CD8-positive, alpha-beta memory T cell (primary cell): ENCODE measurements at regions of chr6 and their contacts with region 1.

Region 1: DNA sequence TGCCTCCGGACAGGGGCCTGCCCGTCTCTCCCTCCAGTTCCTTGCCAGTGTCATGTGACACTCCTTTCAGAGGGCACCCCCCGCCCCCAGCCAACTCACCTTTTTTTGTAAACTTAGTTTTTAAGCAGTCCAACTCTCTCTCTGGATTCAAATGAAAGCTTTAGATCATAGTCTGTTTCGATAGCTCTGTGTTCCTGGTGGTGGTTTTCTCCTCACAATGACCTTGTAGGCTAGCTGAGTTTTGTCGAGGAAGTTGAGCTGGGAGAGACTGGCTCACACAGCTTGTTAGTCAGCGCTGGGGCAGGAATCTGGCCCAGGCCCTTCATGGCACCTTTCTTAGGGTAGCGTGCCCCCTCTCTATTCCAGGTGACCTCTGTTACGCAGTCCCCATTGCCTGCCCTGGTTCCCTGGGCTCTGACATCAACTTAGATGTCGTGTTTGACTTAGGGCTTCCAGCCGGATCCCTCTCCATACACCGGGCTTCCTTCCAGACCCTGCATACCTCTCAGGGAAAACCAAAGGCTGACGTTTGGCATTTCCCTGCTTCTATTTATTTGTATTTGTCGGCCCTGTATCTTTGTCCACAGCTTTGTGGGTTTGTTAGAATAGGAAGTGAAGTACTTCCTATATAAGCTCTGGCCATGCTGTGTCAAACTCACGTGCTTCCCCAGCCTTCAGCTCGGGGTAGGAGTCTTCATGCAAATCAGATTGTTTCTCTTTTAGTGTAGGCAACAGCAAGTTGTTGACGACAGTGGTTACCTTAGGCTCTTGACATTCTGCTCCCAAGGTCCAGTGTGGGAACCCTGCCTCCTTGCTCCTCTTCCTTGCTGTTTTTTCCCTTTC is 12.7 kb downstream of the IGF2R start:
- DNase-seq: peak in 4 of 5 donors; percentile 31 to 63 (median 38)
- H3K4me3 ChIP-seq: peak overlapping the region; percentile 9
- H3K4me3 Mint-ChIP-seq: peak overlapping the region; percentile 70 to 83 (median 80)
- H3K27ac ChIP-seq: peak overlapping the region; percentile 40
- H3K27ac Mint-ChIP-seq: peak overlapping the region; percentile 84 to 99 (median 96)
- H3K4me1 ChIP-seq: peaks cover 89% of the 10 kb centered on the region
- H3K4me1 Mint-ChIP-seq: peaks cover 89 to 100% (median 99%) of the 10 kb centered on the region in 3 donors
- H3K27me3 ChIP-seq: no peaks in the 10 kb centered on the region
- H3K27me3 Mint-ChIP-seq: no peaks in the 10 kb centered on the region

Region 2: DNA sequence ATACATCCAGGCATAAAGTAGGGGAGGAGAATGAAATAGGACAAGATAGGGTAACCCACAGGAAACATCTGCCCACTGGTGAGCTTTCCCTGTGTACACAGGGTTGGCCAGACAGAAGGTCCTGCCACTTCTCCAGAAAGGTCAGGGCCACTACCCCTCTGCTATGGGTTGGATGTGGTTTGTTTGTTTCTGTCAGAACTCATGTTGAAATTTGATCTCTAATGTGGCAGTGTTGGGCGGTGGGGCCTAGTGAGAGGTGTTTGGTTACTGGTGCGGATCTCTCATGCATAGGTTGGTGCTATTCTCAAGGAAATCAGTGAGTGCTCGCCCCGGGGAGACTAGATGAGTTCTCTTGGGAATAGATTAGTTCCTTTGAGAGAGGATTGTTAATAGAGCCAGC is 106.4 kb before region 1 on chr6:
- CTCF ChIA-PET with region 1: no interaction called
- POLR2A ChIA-PET with region 1: no interaction called
- DNase-seq: no peak
- H3K4me3 ChIP-seq: no peak overlapping the region
- H3K4me3 Mint-ChIP-seq: no peak overlapping the region
- H3K27ac ChIP-seq: no peak overlapping the region
- H3K27ac Mint-ChIP-seq: no peak overlapping the region
- H3K4me1 ChIP-seq: no peaks in the 10 kb centered on the region
- H3K4me1 Mint-ChIP-seq: peaks cover 0 to 3% (median 0%) of the 10 kb centered on the region in 3 donors
- H3K27me3 ChIP-seq: no peaks in the 10 kb centered on the region
- H3K27me3 Mint-ChIP-seq: peaks cover 3 to 26% of the 10 kb centered on the region in 2 donors

Region 3: GRCh38 chr6:159890792-159891191 is 90.8 kb before region 1 on chr6 and contains the start of gene MAS1:
- CTCF ChIA-PET with region 1: no interaction called
- POLR2A ChIA-PET with region 1: no interaction called
- DNase-seq: no peak
- H3K4me3 ChIP-seq: no peak within 1 kb of the TSS
- H3K4me3 Mint-ChIP-seq: no peak within 1 kb of the TSS
- H3K27ac ChIP-seq: no peak within 1 kb of the TSS
- H3K27ac Mint-ChIP-seq: no peak within 1 kb of the TSS
- H3K4me1 ChIP-seq: no peaks in the 10 kb centered on the region
- H3K4me1 Mint-ChIP-seq: no peaks in the 10 kb centered on the region
- H3K27me3 ChIP-seq: peaks cover 7% of the 10 kb centered on the region
- H3K27me3 Mint-ChIP-seq: peaks cover 38 to 72% of the 10 kb centered on the region in 2 donors
- total RNA-seq, gene MAS1: not detected

Region 4: DNA sequence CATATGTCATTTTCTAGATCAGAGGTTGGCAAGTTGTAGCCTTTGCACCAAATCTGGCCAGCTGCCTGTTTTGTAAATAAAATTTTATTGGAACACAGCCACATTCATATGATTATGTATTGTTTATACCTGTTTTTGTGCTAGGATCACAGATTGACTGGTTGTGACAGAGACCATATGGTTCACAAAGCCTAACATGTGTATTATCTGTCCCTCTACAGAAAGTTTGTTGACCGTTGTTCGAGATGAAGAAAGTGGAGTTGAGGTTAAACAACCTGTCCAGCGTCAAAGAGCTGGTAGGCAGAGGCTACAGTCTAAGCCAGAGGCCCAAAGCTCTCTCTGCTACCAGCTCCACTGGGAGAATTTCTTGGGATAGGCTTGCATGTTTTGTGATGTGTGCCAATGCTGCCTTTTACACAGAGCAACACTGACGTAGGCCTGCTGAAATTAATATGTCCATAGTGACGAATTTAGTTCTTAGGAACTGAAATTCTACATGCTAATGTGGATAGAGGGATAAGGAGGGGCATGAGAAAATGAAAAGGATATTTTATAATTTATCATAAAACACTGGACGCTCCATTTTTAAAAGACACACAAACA is 24.5 kb before region 1 on chr6:
- CTCF ChIA-PET with region 1: no interaction called
- POLR2A ChIA-PET with region 1: no interaction called
- DNase-seq: no peak
- H3K4me3 ChIP-seq: no peak overlapping the region
- H3K4me3 Mint-ChIP-seq: no peak overlapping the region
- H3K27ac ChIP-seq: no peak overlapping the region
- H3K27ac Mint-ChIP-seq: no peak overlapping the region
- H3K4me1 ChIP-seq: no peaks in the 10 kb centered on the region
- H3K4me1 Mint-ChIP-seq: no peaks in the 10 kb centered on the region
- H3K27me3 ChIP-seq: no peaks in the 10 kb centered on the region
- H3K27me3 Mint-ChIP-seq: peaks cover 6 to 18% of the 10 kb centered on the region in 2 donors

Region 5: GRCh38 chr6:159968440-159969203 is 13.0 kb before region 1 on chr6 and contains the start of gene IGF2R:
- CTCF ChIA-PET with region 1: interaction called, 4 read pairs
- POLR2A ChIA-PET with region 1: interaction called, 19 read pairs
- DNase-seq: peak; percentile 90 to 96 (median 92)
- H3K4me3 ChIP-seq: peak within 1 kb of the TSS; percentile 70
- H3K4me3 Mint-ChIP-seq: peak within 1 kb of the TSS; percentile 91 to 99 (median 96)
- H3K27ac ChIP-seq: peak within 1 kb of the TSS; percentile 71
- H3K27ac Mint-ChIP-seq: peak within 1 kb of the TSS; percentile 84 to 98 (median 95)
- H3K4me1 ChIP-seq: peaks cover 35% of the 10 kb centered on the region
- H3K4me1 Mint-ChIP-seq: peaks cover 40 to 42% (median 41%) of the 10 kb centered on the region in 3 donors
- H3K27me3 ChIP-seq: no peaks in the 10 kb centered on the region
- H3K27me3 Mint-ChIP-seq: peaks cover 0 to 2% of the 10 kb centered on the region in 2 donors
- total RNA-seq, gene IGF2R: 91.4 to 93.7 TPM

Region 6: GRCh38 chr6:160092602-160093001 is 111.0 kb after region 1 on chr6:
- CTCF ChIA-PET with region 1: no interaction called
- POLR2A ChIA-PET with region 1: no interaction called
- DNase-seq: no peak
- H3K4me3 ChIP-seq: no peak overlapping the region
- H3K4me3 Mint-ChIP-seq: no peak overlapping the region
- H3K27ac ChIP-seq: no peak overlapping the region
- H3K27ac Mint-ChIP-seq: peak overlapping the region in 1 of 8 donors; percentile 42
- H3K4me1 ChIP-seq: no peaks in the 10 kb centered on the region
- H3K4me1 Mint-ChIP-seq: no peaks in the 10 kb centered on the region
- H3K27me3 ChIP-seq: no peaks in the 10 kb centered on the region
- H3K27me3 Mint-ChIP-seq: no peaks in the 10 kb centered on the region